ENCODE measurements at regions of chr17 and their contacts with region 1.

Region 1: DNA sequence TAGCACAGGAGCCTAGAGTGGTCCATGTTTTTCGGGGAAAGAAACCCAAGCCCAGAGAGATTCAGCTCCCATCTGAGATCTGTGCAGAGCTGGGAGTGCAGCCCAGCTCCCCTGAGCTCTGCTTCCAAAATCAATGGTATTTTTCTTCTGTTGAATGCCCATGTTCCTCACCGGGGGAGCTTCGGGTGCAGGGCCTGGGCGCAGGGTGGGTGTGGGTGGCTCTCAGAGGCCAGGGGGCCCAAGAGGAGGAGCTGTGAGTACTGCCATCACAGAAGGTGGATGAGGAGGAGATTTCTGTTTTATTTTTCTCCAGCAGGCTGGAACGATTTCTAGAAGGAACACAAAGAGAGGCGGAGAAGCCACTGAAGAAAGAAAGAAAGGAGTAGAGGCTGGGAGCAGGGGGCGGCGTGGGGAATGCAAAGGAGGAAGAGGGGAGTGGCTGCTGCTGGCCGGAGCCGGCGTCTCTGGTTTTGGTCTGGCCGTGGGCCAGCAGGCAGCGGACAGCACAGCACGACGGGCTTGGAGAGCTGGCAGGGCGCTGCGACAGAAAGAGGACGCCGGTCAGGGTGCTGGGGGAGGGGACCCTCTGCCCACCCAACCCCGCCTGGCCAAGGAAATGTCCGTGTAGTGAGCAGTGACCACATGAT is 76.2 kb upstream of the KSR1 start:
- DNase-seq: no peak
- CTCF ChIP-seq: no peak

Region 2: GRCh38 chr17:27265333-27265732 is 114.7 kb before region 1 on chr17:
- in situ Hi-C with region 1: no loop called
- DNase-seq: no peak
- CTCF ChIP-seq: no peak

Region 3: GRCh38 chr17:27430882-27431491 is 51.0 kb after region 1 on chr17:
- in situ Hi-C with region 1: loop called (anchors 10 kb)
- DNase-seq: no peak
- CTCF ChIP-seq: no peak

Region 4: DNA sequence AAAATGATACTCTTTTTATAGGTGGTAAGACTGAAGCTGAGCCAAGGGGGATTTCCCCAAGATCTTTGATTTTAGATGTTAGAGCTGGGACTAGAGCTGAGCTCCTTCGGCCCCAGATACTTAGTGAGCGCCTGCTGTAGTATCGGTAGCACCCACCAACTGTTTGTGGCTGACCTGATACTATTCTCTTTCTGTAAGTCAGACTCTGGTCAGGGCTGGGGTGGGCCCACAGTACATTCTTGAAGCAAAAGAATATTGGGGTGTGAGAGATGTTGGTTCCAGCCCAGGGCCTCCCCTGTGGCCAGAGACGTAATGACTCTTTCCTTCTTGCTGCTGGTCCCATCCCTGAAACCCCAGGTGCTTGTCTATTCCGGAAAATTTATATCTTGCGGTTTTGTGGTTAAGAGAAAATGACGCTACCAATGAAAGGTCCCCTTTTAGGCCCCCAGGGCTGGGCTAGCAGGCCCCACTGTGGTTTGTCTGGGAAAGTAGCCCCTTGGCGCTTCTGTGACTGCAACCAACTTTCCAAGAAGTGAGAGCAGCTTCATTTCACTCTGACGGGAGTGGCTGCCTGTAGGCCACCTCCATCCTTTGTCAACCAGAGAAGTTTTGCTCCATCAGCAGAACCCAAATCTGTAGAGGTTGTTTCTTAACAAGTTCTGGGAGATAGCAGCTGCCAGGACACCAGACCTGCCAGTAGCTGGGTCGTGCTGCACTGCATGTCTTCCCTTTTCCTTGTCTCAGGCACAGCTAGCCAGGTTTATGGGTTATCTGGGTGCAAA is 164.5 kb after region 1 on chr17:
- in situ Hi-C with region 1: loop called (anchors 10 kb)
- DNase-seq: peak; percentile 86
- CTCF ChIP-seq: no peak

Region 5: DNA sequence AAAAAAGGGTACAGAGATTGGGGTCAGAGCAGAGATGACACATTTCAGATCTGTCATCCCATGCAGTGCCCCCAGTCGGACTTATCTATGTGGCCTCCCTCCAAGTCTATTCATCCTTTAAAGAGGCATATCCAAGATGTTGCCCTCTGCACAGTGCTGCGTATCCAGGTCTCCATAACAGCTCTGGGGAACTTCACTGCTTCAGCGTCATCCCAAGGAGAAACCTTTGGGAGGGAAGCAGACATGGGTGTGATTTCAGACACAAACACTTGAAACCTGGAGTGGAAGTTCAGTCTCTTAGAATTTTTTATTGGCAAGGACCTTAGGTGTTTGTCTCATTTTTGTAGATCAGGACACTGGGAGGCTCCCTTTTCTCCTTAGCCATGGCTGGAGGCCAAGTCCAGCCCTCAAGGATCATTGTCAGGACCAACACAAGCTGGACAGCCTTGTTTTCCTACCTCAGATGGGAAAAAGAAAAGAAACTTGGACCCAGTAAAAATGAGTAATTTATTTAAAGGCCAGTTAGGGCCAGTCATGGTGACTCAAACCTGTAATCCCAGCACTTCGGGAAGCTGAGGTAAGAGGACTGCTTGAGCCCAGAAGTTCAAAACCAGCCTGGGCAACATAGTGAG is 638.5 kb after region 1 on chr17:
- in situ Hi-C with region 1: no loop called
- DNase-seq: no peak
- CTCF ChIP-seq: no peak